Activated B cell treated with CpG ODN at 0.5 μM for 24 hours (primary cell): ENCODE measurements at regions of chr13 and their contacts with region 1.

Region 1: GRCh38 chr13:95660981-95661581 is 15.9 kb upstream of the DNAJC3 start:
- DNase-seq: no peak
- ATAC-seq: no peak
- H3K4me3 Mint-ChIP-seq: no peak overlapping the region
- H3K27ac Mint-ChIP-seq: no peak overlapping the region
- H3K4me1 Mint-ChIP-seq: no peaks in the 10 kb centered on the region
- H3K27me3 Mint-ChIP-seq: peaks cover 12% of the 10 kb centered on the region
- CTCF ChIP-seq: no peak

Region 2: DNA sequence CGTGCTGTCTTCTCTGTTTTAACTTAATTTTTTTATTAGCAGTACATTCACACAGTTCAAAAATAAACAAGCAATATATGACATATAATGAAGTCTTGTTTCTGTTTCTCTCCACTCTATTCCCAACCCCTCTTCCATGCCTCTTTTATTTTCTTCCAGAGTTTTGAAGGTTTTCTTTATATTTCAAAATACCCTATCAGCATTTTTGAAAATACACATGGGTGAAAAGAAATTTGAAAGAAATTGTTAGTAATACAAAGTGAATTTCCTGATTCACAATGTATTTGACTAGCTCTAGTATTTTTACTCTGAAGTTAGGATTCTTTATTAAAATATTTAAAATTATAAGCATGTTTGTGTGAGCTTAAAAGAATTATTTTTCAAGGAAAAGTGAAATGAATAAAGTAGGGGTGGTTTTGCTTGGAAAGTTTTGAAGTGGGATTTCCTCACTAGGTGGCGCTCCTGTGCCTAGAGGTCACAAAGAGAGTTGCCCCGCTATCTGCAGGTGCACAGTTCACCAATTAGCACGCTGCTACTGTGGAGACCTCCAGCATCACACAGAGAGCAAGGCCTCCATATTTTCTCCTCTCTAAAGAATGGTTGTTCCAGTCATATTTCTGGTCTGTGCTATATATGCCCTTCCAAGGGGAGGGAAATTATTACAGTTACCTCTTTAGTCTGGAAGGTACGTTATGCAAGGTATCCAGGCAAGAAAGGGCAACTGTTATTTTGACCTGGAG is 986.3 kb before region 1 on chr13:
- CTCF ChIA-PET with region 1: no interaction called
- POLR2A ChIA-PET with region 1: no interaction called
- intact Hi-C with region 1: loop called (anchors 10 kb)
- DNase-seq: no peak
- ATAC-seq: no peak
- H3K4me3 Mint-ChIP-seq: no peak overlapping the region
- H3K27ac Mint-ChIP-seq: no peak overlapping the region
- H3K4me1 Mint-ChIP-seq: no peaks in the 10 kb centered on the region
- H3K27me3 Mint-ChIP-seq: peaks cover 16% of the 10 kb centered on the region
- CTCF ChIP-seq: peak; percentile 38

Region 3: GRCh38 chr13:95494082-95494681 is 166.9 kb before region 1 on chr13:
- CTCF ChIA-PET with region 1: interaction called, 3 read pairs
- POLR2A ChIA-PET with region 1: no interaction called
- intact Hi-C with region 1: loop called (anchors 5 kb)
- DNase-seq: no peak
- ATAC-seq: no peak
- H3K4me3 Mint-ChIP-seq: no peak overlapping the region
- H3K27ac Mint-ChIP-seq: no peak overlapping the region
- H3K4me1 Mint-ChIP-seq: no peaks in the 10 kb centered on the region
- H3K27me3 Mint-ChIP-seq: peaks cover 20% of the 10 kb centered on the region
- CTCF ChIP-seq: peak; percentile 90

Region 4: DNA sequence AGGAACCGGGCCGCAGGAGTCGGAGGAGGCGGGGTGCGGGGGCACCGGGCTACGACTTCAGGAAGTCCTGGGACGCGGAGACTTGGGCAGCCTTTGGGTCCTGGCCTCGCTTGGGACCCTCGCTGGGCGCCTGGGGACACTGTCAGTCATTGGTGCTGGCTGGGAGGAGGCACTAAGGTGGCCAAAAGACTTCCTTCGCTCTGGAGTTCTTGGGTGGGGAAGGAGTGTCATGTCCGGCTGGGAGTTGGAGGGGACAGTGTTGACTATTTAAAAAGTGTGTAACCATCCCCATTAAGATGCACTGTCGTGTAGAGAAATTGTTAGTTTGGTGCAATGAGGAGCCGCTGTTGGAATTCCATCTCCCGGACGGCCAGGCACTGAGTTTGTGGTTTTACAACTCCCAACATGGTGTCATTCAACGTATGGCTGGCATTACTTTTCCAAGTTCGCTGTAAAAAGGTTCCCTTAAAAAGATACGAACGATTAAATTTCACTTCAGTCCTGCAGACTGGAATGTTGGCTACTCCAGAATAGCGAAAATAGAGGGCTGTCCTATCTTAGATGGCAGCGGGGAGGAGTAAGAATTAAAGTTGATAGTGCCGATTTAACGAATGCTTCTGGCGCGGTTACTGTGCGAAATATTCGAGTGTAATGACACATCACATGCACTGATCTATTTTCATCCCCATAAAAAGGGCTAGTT is 16.6 kb after region 1 on chr13:
- CTCF ChIA-PET with region 1: no interaction called
- POLR2A ChIA-PET with region 1: no interaction called
- intact Hi-C with region 1: no loop called
- DNase-seq: no peak
- ATAC-seq: no peak
- H3K4me3 Mint-ChIP-seq: peak overlapping the region; percentile 96
- H3K27ac Mint-ChIP-seq: peak overlapping the region; percentile 67
- H3K4me1 Mint-ChIP-seq: peaks cover 56% of the 10 kb centered on the region
- H3K27me3 Mint-ChIP-seq: no peaks in the 10 kb centered on the region
- CTCF ChIP-seq: no peak

Region 5: GRCh38 chr13:95704510-95704909 is 43.4 kb after region 1 on chr13:
- CTCF ChIA-PET with region 1: no interaction called
- POLR2A ChIA-PET with region 1: no interaction called
- intact Hi-C with region 1: loop called (anchors 10 kb)
- DNase-seq: no peak
- ATAC-seq: no peak
- H3K4me3 Mint-ChIP-seq: no peak overlapping the region
- H3K27ac Mint-ChIP-seq: no peak overlapping the region
- H3K4me1 Mint-ChIP-seq: peaks cover 48% of the 10 kb centered on the region
- H3K27me3 Mint-ChIP-seq: no peaks in the 10 kb centered on the region
- CTCF ChIP-seq: no peak

Region 6: DNA sequence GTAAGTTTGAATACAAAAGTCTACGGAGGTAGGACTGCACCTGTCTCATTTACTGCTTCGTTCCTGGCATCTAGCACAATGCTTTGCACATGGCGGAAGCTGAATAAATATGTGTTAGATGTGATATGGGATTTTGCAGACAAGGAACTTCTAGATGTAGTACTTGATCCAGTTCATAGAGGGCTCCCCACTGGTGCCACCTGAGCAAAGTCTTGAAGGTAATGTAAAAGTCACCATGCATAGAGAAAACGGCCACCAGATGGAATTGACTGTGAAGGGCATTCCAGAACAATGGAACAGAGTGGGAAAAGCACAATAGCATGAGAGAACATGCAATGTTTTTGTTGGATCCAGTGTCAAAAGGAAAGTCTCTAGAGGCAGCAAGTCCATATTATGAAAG is 638.2 kb after region 1 on chr13:
- CTCF ChIA-PET with region 1: no interaction called
- POLR2A ChIA-PET with region 1: no interaction called
- intact Hi-C with region 1: no loop called
- DNase-seq: no peak
- ATAC-seq: no peak
- H3K4me3 Mint-ChIP-seq: no peak overlapping the region
- H3K27ac Mint-ChIP-seq: no peak overlapping the region
- H3K4me1 Mint-ChIP-seq: no peaks in the 10 kb centered on the region
- H3K27me3 Mint-ChIP-seq: no peaks in the 10 kb centered on the region
- CTCF ChIP-seq: no peak